CD4-positive, alpha-beta memory T cell (primary cell): ENCODE measurements at regions of chr7 and their contacts with region 1.

Region 1: DNA sequence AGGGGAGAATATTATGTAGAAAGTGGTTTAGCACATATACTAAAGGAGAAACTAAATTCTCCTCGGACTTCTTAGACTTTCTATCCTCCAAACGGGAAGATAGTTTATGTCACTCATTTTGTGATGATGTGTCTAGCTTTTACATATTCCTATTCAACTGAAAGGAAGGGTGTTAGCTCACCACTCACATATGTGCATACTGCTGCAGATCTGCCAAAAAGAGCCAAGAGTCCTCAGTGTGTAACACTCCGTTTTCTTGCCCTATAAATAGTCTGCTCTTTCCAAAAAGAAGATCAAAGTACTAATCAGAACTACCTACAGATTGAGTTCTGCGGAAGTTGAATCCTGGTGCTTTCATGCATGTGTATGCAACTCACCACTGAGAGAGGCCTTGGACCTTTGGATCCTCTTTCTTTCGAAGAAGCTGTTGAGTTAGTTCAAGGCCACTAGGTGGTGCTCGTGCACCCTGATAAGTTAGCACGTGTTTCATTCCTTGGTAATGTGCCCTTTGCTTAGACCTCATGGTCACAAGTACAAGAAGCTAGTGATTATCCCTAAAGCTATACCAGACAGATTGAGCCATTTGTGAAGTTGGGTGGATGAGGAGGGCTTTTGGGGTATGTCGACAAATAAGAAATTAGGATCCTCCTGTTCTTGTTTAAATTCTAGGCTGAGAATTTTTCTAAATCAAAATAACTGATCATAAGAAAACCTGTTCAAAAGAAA is 14.1 kb downstream of the YAE1 start:
- DNase-seq: peak; percentile 69 to 78 (median 73)
- H3K4me3 ChIP-seq: no peak overlapping the region
- H3K4me3 Mint-ChIP-seq: no peak overlapping the region
- H3K27ac ChIP-seq: no peak overlapping the region
- H3K27ac Mint-ChIP-seq: peak overlapping the region in 6 of 7 donors; percentile 3 to 67 (median 31)
- H3K4me1 ChIP-seq: no peaks in the 10 kb centered on the region
- H3K4me1 Mint-ChIP-seq: peaks cover 0 to 6% (median 6%) of the 10 kb centered on the region in 4 donors
- H3K27me3 ChIP-seq: no peaks in the 10 kb centered on the region
- H3K27me3 Mint-ChIP-seq: no peaks in the 10 kb centered on the region

Region 2: DNA sequence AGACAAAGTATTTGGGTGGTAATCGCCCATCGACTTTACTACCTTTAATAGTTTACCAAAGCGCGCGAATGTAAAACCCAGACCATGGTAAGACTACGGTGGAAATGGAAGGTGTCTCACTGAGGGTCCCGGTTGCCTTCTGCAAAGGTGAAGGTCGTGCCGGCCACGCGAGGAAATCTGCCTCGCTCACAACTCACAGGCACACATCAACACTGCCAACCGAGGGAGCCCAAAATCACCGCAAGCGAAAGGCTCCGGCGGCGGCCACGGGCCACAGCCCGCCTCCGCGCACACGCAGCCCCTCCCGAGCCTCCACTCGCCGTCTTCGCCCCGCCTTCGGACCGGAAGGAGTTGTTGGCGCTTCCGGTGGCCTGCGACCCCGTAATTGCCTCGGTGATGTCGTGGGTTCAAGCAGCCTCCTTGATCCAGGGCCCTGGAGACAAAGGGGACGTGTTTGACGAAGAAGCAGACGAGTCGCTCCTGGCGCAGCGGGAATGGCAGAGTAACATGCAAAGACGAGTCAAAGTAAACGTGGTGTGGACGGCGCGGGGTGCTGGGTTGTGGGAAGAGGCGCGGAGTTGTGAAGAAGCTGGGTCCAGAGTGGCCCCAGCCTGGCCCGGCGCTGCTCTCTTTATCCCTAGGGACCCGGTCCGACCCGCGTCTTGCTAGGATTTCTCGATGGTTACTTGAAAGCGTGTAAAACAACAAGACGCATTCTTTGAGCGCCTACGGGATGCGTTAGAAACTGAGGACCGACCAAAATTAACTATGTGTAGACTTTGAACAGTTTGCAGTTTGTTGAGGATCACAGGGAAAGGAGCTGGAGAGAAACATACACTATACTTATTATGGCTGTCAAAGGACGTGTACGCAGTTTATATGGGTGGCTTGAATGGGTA is 14.0 kb before region 1 on chr7 and contains the start of gene YAE1:
- CTCF ChIA-PET with region 1: interaction called, 12 read pairs
- POLR2A ChIA-PET with region 1: interaction called, 4 read pairs
- intact Hi-C with region 1: no loop called
- DNase-seq: peak; percentile 71 to 75 (median 72)
- H3K4me3 ChIP-seq: peak within 1 kb of the TSS; percentile 83 to 86
- H3K4me3 Mint-ChIP-seq: peak within 1 kb of the TSS; percentile 98 to 100 (median 100)
- H3K27ac ChIP-seq: peak within 1 kb of the TSS; percentile 62
- H3K27ac Mint-ChIP-seq: peak within 1 kb of the TSS; percentile 87 to 99 (median 98)
- H3K4me1 ChIP-seq: peaks cover 19% of the 10 kb centered on the region
- H3K4me1 Mint-ChIP-seq: peaks cover 19 to 29% (median 24%) of the 10 kb centered on the region in 4 donors
- H3K27me3 ChIP-seq: no peaks in the 10 kb centered on the region
- H3K27me3 Mint-ChIP-seq: peaks cover 0 to 1% of the 10 kb centered on the region in 2 donors
- total RNA-seq, gene YAE1: 23.4 to 27.5 TPM

Region 3: DNA sequence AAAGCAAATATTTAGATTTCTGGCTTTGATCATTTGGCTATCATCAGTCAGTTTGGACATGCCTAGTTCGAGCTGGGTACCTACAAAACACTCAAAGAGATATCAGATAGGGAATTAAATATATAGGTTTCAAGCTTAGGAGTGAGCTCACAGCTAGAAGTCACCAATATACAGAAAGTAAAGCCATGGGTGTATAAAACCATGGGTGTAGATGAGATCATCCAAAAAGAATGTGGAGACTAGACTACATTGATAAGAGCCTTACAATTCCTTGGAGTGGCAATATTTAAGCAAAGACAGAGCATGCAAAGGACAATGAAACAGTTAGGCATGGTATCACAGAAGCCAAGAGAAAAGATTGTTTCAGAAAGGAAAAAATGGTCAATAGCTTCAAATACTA is 35.8 kb after region 1 on chr7:
- CTCF ChIA-PET with region 1: interaction called, 65 read pairs
- POLR2A ChIA-PET with region 1: interaction called, 3 read pairs
- intact Hi-C with region 1: no loop called
- DNase-seq: no peak
- H3K4me3 ChIP-seq: no peak overlapping the region
- H3K4me3 Mint-ChIP-seq: no peak overlapping the region
- H3K27ac ChIP-seq: no peak overlapping the region
- H3K27ac Mint-ChIP-seq: no peak overlapping the region
- H3K4me1 ChIP-seq: no peaks in the 10 kb centered on the region
- H3K4me1 Mint-ChIP-seq: no peaks in the 10 kb centered on the region
- H3K27me3 ChIP-seq: no peaks in the 10 kb centered on the region
- H3K27me3 Mint-ChIP-seq: peaks cover 12 to 18% of the 10 kb centered on the region in 2 donors

Region 4: GRCh38 chr7:39633563-39634477 is 53.5 kb after region 1 on chr7:
- CTCF ChIA-PET with region 1: interaction called, 7 read pairs
- POLR2A ChIA-PET with region 1: interaction called, 3 read pairs
- intact Hi-C with region 1: loop called (anchors 1 kb)
- DNase-seq: peak; percentile 43 to 73 (median 58)
- H3K4me3 ChIP-seq: peak overlapping the region in 1 of 2 donors; percentile 8
- H3K4me3 Mint-ChIP-seq: peak overlapping the region; percentile 56 to 85 (median 76)
- H3K27ac ChIP-seq: peak overlapping the region; percentile 52
- H3K27ac Mint-ChIP-seq: peak overlapping the region; percentile 90 to 99 (median 96)
- H3K4me1 ChIP-seq: peaks cover 56% of the 10 kb centered on the region
- H3K4me1 Mint-ChIP-seq: peaks cover 57 to 77% (median 66%) of the 10 kb centered on the region in 4 donors
- H3K27me3 ChIP-seq: no peaks in the 10 kb centered on the region
- H3K27me3 Mint-ChIP-seq: no peaks in the 10 kb centered on the region

Region 5: DNA sequence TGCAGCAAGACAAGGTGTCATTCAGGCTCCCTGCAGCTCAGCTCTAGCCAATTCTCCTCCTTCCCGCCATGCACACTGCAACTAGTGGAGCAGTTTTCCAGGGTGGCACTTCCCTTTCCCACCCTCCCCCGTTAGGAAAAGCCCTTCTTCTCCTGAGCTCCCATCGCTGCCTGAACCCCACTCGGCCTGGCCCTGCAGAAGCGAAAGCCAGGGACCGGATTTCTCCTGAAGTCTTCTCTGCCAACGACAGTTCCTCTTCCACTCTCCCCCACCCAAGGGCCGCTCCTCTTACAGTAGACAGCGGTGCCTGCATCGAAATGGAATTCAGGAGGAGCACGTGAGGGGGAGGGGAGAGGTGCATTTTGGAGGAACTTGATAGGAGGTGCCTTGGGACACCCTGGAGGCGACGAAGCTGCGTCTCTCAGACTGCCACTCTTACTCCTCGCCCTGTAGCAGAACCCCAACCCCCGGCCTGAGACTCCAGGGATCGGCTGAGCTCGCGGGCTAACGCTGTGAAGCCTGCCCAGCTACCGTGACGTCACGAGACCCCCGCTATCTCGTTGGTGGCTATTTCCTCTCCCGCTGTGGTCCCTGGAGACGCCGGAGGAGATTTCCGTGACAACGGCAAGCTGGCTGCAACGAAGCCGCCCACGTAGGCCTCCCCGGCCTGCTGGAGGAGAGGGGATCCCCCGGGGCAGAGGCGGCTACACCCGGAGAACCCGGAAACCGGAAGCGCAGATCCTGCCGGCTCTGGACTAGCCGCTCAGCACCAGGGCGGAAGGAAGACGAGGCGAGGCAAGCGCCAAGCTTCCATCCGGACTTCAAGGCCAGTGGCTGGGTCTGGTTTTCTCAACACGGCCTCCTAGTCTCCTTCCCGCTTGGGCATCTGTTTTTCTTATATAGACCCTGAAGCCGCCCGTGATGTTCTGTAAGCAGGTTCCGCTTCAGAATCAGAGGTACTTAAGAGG is 152.8 kb after region 1 on chr7:
- CTCF ChIA-PET with region 1: interaction called, 748 read pairs
- POLR2A ChIA-PET with region 1: interaction called, 7 read pairs
- intact Hi-C with region 1: no loop called
- DNase-seq: peak; percentile 87 to 97 (median 94)
- H3K4me3 ChIP-seq: peak overlapping the region; percentile 37 to 84
- H3K4me3 Mint-ChIP-seq: peak overlapping the region; percentile 90 to 100 (median 96)
- H3K27ac ChIP-seq: peak overlapping the region; percentile 88
- H3K27ac Mint-ChIP-seq: peak overlapping the region; percentile 94 to 100 (median 97)
- H3K4me1 ChIP-seq: peaks cover 41% of the 10 kb centered on the region
- H3K4me1 Mint-ChIP-seq: peaks cover 23 to 56% (median 39%) of the 10 kb centered on the region in 4 donors
- H3K27me3 ChIP-seq: no peaks in the 10 kb centered on the region
- H3K27me3 Mint-ChIP-seq: peaks cover 0 to 1% of the 10 kb centered on the region in 2 donors

Region 6: DNA sequence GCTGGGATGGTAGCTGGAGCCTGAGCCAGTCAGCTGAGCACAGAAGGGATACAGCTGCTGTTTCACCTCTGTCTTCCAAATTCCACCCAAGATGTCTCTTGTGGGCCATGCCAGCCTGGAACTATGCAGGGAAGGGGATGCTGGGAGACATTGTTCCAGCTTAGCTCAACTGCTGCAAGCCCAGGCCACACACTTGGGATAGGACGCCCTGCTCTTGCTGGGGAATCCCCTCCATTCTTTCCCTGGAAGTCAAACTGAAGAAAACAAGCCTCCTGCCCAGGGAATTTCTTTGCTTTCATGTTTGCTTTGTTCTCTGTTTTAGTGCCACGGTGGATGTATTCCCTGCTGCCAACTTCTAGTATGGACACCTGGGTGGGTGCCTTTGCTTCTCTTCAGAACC is 314.6 kb after region 1 on chr7:
- CTCF ChIA-PET with region 1: interaction called, 19 read pairs
- POLR2A ChIA-PET with region 1: no interaction called
- intact Hi-C with region 1: loop called (anchors 5 kb)
- DNase-seq: no peak
- H3K4me3 ChIP-seq: no peak overlapping the region
- H3K4me3 Mint-ChIP-seq: no peak overlapping the region
- H3K27ac ChIP-seq: no peak overlapping the region
- H3K27ac Mint-ChIP-seq: no peak overlapping the region
- H3K4me1 ChIP-seq: no peaks in the 10 kb centered on the region
- H3K4me1 Mint-ChIP-seq: peaks cover 0 to 2% (median 0%) of the 10 kb centered on the region in 4 donors
- H3K27me3 ChIP-seq: no peaks in the 10 kb centered on the region
- H3K27me3 Mint-ChIP-seq: peaks cover 0 to 11% of the 10 kb centered on the region in 2 donors

Region 7: DNA sequence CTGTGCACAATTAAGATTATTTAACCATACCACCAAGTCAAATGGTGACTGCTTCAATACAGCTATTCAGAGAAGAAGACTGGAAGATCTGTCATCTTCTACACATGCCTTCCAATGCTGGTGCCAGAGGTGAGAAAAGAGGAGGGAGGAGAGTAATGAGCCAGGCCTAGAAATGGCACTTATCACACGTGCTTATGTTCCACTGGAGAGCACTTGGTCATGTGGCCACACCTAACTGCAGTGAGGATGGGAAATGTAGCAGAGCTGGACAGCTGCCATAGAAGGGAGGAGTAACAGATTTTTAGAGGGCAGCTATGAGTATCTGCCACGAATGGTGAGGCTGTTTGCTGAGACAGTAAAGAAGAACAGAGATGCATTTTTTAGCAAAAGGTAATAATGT is 477.0 kb after region 1 on chr7:
- CTCF ChIA-PET with region 1: interaction called, 5 read pairs
- POLR2A ChIA-PET with region 1: no interaction called
- intact Hi-C with region 1: loop called (anchors 5 kb)
- DNase-seq: no peak
- H3K4me3 ChIP-seq: no peak overlapping the region
- H3K4me3 Mint-ChIP-seq: no peak overlapping the region
- H3K27ac ChIP-seq: no peak overlapping the region
- H3K27ac Mint-ChIP-seq: peak overlapping the region in 4 of 7 donors; percentile 30 to 56 (median 42)
- H3K4me1 ChIP-seq: no peaks in the 10 kb centered on the region
- H3K4me1 Mint-ChIP-seq: peaks cover 6 to 19% (median 12%) of the 10 kb centered on the region in 4 donors
- H3K27me3 ChIP-seq: no peaks in the 10 kb centered on the region
- H3K27me3 Mint-ChIP-seq: no peaks in the 10 kb centered on the region